Motor neuron (in vitro differentiated cells): ENCODE measurements at regions of chr7 and their contacts with region 1.

Region 1: GRCh38 chr7:28853834-28854749 is 104.0 kb downstream of the TRIL start:
- ATAC-seq: peak; percentile 94 to 100 (median 100)
- H3K4me3 ChIP-seq: peak overlapping the region; percentile 36 to 47 (median 46)
- H3K27ac ChIP-seq: no peak overlapping the region
- H3K4me1 ChIP-seq: no peaks in the 10 kb centered on the region

Region 2: GRCh38 chr7:28179120-28180030 is 674.7 kb before region 1 on chr7:
- in situ Hi-C with region 1: loop called in 1 of 9 experiments (anchors 25 kb)
- ATAC-seq: peak; percentile 52 to 70 (median 66)
- H3K4me3 ChIP-seq: peak overlapping the region; percentile 69 to 97 (median 79)
- H3K27ac ChIP-seq: peak overlapping the region; percentile 69 to 74
- H3K4me1 ChIP-seq: peaks cover 0 to 11% of the 10 kb centered on the region in 2 donors

Region 3: DNA sequence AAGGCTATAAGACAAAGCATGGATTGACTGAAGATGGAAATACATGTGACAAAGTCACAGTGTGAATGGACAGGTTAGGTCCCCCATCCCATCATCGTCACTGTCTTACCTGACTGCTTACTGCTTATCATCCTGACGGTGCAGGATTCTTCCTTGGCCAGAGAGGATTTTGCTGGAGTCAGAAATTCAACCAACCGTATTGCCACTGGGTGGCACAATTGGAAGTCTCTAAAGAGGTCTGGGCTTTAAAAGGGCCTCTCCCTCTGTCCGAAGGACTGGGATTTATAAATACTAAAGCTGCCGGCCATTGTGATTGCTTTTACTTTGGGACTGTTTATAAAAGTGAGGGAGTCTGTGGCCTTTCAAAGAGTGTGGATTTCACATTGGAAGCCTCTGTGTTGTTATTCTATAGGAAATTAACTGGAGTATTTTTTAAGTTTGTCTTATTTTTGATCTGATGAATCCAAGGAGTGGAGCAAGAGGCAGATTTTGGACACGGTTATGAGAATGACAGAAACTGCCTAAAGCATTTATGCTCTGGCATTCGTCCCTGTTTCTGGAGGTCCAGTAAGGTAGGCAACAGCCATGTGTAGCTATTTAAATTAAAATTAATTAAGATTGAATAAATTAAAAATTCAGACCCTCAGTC is 555.1 kb before region 1 on chr7:
- in situ Hi-C with region 1: loop called in 1 of 9 experiments (anchors 25 kb)
- ATAC-seq: peak; percentile 75 to 99 (median 88)
- H3K4me3 ChIP-seq: no peak overlapping the region
- H3K27ac ChIP-seq: no peak overlapping the region
- H3K4me1 ChIP-seq: peaks cover 0 to 9% of the 10 kb centered on the region in 2 donors

Region 4: GRCh38 chr7:28389504-28390395 is 464.3 kb before region 1 on chr7:
- in situ Hi-C with region 1: loop called in 5 of 9 experiments (anchors 25 kb)
- ATAC-seq: peak; percentile 53 to 74 (median 64)
- H3K4me3 ChIP-seq: peak overlapping the region in 3 of 5 donors; percentile 8 to 29 (median 14)
- H3K27ac ChIP-seq: no peak overlapping the region
- H3K4me1 ChIP-seq: peaks cover 6 to 18% of the 10 kb centered on the region in 2 donors